K562 (cell line): ENCODE measurements at regions of chr1 and their contacts with region 1.

Region 1: GRCh38 chr1:109112652-109113285 is 1.1 kb upstream of the ELAPOR1 start:
- DNase-seq: peak; percentile 93 to 97 (median 96)
- ATAC-seq: peak; percentile 98
- H3K4me3 ChIP-seq: no peak overlapping the region
- H3K27ac ChIP-seq: no peak overlapping the region
- H3K4me1 ChIP-seq: peaks cover 10 to 20% of the 10 kb centered on the region in 2 experiments; a peak in 4 of 5 replicates
- H3K27me3 ChIP-seq: peaks cover 0 to 6% of the 10 kb centered on the region in 2 experiments; a peak in 1 of 5 replicates
- CTCF ChIP-seq: peak; percentile 96 to 99 (median 97)
- EP300 ChIP-seq: no peak
- POLR2A ChIP-seq: no peak
- RAD21 ChIP-seq: peak; percentile 78 to 88

Region 2: GRCh38 chr1:107782217-107782845 is 1330.4 kb before region 1 on chr1:
- CTCF ChIA-PET with region 1: interaction called, 8 read pairs
- POLR2A ChIA-PET with region 1: no interaction called
- in situ Hi-C with region 1: no loop called
- intact Hi-C with region 1: loop called (anchors 10 kb)
- DNase-seq: peak; percentile 35 to 75 (median 57)
- ATAC-seq: peak; percentile 89
- H3K4me3 ChIP-seq: no peak overlapping the region
- H3K27ac ChIP-seq: no peak overlapping the region
- H3K4me1 ChIP-seq: no peaks in the 10 kb centered on the region
- H3K27me3 ChIP-seq: no peaks in the 10 kb centered on the region
- CTCF ChIP-seq: peak; percentile 58 to 84 (median 60); a peak in 5 of 6 replicates
- EP300 ChIP-seq: no peak
- POLR2A ChIP-seq: no peak
- RAD21 ChIP-seq: peak; percentile 92 to 95

Region 3: DNA sequence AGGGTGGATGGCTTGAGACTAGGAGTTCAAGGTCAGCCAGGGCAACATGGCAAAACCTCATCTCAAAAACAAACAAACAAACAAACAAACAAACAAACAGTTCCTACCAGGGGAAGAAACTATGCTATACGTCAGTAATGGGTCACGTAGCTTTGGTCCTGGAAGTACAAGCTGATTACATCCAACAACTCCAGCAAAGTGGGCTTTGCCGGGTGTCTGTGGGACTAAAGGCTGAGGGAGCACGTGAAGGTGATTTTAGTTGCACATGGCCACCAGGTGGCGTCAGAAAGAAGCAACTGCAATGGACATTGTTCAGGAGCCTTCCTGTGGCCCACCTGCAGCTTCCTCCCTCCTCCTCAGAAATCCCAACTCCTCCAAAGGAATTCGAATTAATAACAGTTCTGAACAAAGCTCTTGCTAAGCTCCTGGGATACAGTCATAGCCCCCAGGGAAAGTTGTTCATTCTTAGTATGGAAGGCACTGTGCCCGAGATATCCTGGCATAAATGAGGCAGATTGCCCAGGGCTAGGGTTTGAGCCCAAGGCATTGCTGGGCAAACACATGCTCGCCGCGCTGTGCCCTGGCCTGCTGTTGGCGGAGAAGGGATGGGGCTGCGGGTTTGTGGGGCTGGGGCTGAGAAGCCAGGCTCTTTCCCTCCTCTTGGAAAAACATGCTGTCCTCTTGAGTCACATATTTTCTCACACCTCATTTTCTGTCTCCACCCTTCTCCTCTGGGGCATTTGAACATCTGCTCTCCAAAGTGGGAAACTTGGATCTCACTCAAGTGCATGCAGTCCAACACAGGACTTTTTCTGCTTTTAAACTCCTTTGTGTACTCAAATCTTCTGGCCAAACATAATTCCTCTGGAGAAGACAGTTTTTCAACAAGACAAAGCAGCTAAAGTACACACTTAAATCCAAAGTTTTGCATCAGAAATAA is 284.5 kb before region 1 on chr1:
- CTCF ChIA-PET with region 1: interaction called, 32 read pairs
- POLR2A ChIA-PET with region 1: no interaction called
- in situ Hi-C with region 1: loop called (anchors 5 kb)
- intact Hi-C with region 1: loop called (anchors 1 kb)
- DNase-seq: peak; percentile 78 to 90 (median 80)
- ATAC-seq: peak; percentile 88
- H3K4me3 ChIP-seq: no peak overlapping the region
- H3K27ac ChIP-seq: no peak overlapping the region
- H3K4me1 ChIP-seq: peaks cover 3 to 4% of the 10 kb centered on the region in 2 experiments; a peak in 3 of 5 replicates
- H3K27me3 ChIP-seq: no peaks in the 10 kb centered on the region
- CTCF ChIP-seq: peak; percentile 86 to 92 (median 87)
- EP300 ChIP-seq: no peak
- POLR2A ChIP-seq: no peak
- RAD21 ChIP-seq: peak; percentile 75 to 92

Region 4: DNA sequence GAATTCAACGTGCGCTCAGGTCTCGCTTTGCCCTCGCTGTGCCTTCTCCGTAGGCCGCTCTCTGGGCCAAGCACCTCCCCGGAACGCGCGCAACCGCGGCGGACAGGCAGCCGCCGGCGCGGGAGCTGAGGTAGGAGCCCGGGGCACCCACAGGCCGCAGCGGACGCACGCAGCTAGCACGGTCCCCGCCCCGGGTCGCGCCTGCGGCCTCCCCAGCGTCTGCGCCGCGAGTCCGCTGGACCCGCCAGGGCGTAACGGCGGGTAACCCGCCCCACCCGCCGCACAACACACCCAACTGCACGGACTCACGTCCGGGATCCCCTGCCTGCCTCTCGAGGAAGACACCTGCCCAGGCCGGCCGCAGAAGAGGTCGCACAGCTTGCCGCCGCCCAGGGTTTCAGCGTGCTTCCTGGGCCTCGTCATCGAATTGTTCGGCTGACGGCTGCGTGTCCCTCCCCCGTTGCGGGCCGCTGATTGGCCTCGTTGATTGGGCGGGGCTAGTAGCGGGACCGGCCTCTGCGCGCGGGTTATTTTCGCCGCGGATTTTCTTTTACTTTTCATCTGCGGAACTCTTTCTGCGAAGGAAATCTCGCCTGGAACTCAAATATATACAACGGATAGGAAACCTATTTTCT is 149.6 kb before region 1 on chr1 and contains the start of gene CLCC1:
- CTCF ChIA-PET with region 1: no interaction called
- POLR2A ChIA-PET with region 1: no interaction called
- in situ Hi-C with region 1: no loop called
- intact Hi-C with region 1: loop called (anchors 5 kb)
- DNase-seq: peak; percentile 98
- ATAC-seq: peak; percentile 95
- H3K4me3 ChIP-seq: peak within 1 kb of the TSS; percentile 65
- H3K27ac ChIP-seq: peak within 1 kb of the TSS; percentile 91
- H3K4me1 ChIP-seq: peaks cover 9 to 14% of the 10 kb centered on the region in 2 experiments; a peak in 4 of 5 replicates
- H3K27me3 ChIP-seq: no peaks in the 10 kb centered on the region
- CTCF ChIP-seq: no peak
- EP300 ChIP-seq: peak; percentile 22; the same call in 1 of the 2 replicates
- POLR2A ChIP-seq: peak; percentile 96
- RAD21 ChIP-seq: peak in 1 of 2 experiments; percentile 21; a peak in 1 of 4 replicates
- polyA plus RNA-seq, gene CLCC1: 28.8 to 33.9 TPM

Region 5: GRCh38 chr1:109099938-109100773 is 12.6 kb before region 1 on chr1:
- CTCF ChIA-PET with region 1: interaction called, 3 read pairs
- POLR2A ChIA-PET with region 1: interaction called, 65 read pairs
- in situ Hi-C with region 1: no loop called
- intact Hi-C with region 1: no loop called
- DNase-seq: peak; percentile 97 to 100 (median 98)
- ATAC-seq: peak; percentile 95
- H3K4me3 ChIP-seq: peak overlapping the region; percentile 81
- H3K27ac ChIP-seq: peak overlapping the region; percentile 95
- H3K4me1 ChIP-seq: peaks cover 19 to 21% of the 10 kb centered on the region in 2 experiments
- H3K27me3 ChIP-seq: no peaks in the 10 kb centered on the region
- CTCF ChIP-seq: peak; percentile 91 to 96 (median 96)
- EP300 ChIP-seq: peak; percentile 78
- POLR2A ChIP-seq: peak; percentile 100
- RAD21 ChIP-seq: peak; percentile 50 to 55

Region 6: GRCh38 chr1:109136766-109137165 is 24.0 kb after region 1 on chr1:
- CTCF ChIA-PET with region 1: no interaction called
- POLR2A ChIA-PET with region 1: no interaction called
- in situ Hi-C with region 1: no loop called
- intact Hi-C with region 1: no loop called
- DNase-seq: no peak
- ATAC-seq: no peak
- H3K4me3 ChIP-seq: no peak overlapping the region
- H3K27ac ChIP-seq: no peak overlapping the region
- H3K4me1 ChIP-seq: peaks cover 29 to 35% of the 10 kb centered on the region in 2 experiments; a peak in 3 of 5 replicates
- H3K27me3 ChIP-seq: no peaks in the 10 kb centered on the region
- CTCF ChIP-seq: no peak
- EP300 ChIP-seq: no peak; the same call in 1 of the 2 replicates
- POLR2A ChIP-seq: no peak
- RAD21 ChIP-seq: no peak

Region 7: DNA sequence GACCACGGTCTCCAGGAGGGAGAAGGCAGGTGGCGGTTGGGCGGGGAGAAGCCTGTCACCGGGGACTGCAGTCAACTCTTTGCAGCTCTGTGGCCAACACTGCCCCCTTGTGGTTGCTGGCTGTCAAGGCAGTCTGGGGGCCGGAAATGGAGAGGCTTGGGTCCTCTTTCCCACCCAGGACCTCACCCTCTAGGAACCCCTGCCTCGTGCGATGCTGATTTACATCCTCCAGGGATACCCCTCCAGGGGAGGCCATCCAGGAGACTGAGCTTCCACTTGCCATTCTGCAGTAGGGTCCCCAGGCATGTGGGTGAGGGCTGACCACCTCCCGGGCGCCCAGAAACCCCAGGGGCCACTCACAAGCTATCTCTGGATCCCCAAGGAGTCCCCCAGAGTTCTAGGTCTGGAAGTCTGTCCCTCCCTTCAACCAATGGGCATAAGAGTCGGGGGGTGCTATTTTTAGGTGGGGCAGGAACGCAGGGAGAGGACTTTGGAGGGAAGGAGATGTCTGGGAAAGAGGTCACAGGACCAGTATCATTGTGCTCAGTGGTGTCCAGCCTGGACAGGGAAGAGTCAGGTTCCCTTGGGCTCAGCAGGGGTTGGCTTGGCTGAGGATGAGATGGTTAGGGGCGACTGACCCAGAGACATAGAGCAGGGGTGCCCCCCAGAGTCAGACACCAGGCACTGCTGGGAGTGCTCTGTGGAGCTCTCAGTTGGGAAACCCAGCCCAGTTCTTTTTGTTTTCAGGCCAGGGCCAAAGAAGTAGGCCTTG is 419.8 kb after region 1 on chr1:
- CTCF ChIA-PET with region 1: interaction called, 3 read pairs
- POLR2A ChIA-PET with region 1: no interaction called
- in situ Hi-C with region 1: no loop called
- intact Hi-C with region 1: loop called (anchors 10 kb)
- DNase-seq: peak; percentile 88 to 91 (median 90)
- ATAC-seq: peak; percentile 92
- H3K4me3 ChIP-seq: no peak overlapping the region
- H3K27ac ChIP-seq: peak overlapping the region; percentile 63; the same call in 2 of the 3 replicates
- H3K4me1 ChIP-seq: peaks cover 9 to 14% of the 10 kb centered on the region in 2 experiments; a peak in 4 of 5 replicates
- H3K27me3 ChIP-seq: peaks cover 5 to 14% of the 10 kb centered on the region in 2 experiments
- CTCF ChIP-seq: peak; percentile 97 to 99 (median 97)
- EP300 ChIP-seq: no peak
- POLR2A ChIP-seq: no peak
- RAD21 ChIP-seq: peak; percentile 92 to 98